ENCODE measurements at regions of chr1 and their contacts with region 1.

Region 1: DNA sequence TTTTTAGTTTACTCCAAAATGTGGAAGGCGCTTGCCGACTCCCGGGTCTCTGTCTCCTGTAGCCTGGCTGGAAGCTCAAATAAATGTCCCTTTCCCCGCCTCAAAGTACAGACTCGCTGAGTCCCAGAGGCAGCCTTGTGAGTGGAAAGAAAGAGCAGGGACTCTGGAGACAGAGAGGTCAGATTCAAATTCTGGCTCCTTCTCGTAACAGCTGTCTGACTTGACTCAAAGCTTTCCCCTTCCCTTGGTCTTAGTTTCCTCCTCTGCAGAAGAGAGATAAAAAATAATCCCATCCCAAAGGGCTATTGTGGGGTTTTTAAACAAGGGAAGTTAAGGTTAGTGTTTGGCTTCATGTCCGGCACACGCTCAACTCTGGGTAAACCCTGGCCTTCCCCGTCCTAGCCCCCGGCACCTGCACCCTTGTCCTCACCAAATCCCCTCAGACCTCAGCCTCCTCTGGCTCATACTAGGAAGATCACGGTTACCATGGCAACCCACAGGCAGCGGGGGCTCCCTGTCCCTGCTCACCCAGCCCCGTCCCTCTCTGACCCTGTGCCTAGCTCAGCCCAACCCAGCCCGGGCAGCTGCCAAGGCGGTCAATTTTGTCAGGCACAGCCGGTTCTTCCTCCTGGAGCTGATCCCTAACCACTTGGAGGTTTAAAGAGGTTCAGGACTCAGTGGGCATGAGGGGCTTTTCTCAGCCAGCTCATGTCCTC is 49.2 kb upstream of the IGSF21 start:
- DNase-seq: no peak
- H3K4me3 ChIP-seq: no peak overlapping the region
- H3K4me3 Mint-ChIP-seq: no peak overlapping the region
- H3K27ac ChIP-seq: no peak overlapping the region
- H3K27ac Mint-ChIP-seq: no peak overlapping the region
- H3K4me1 ChIP-seq: no peaks in the 10 kb centered on the region
- H3K4me1 Mint-ChIP-seq: no peaks in the 10 kb centered on the region
- H3K27me3 ChIP-seq: no peaks in the 10 kb centered on the region
- H3K27me3 Mint-ChIP-seq: peaks cover 0 to 2% (median 1%) of the 10 kb centered on the region in 3 donors
- CTCF ChIP-seq: no peak

Region 2: GRCh38 chr1:18109756-18110597 is 51.6 kb after region 1 on chr1:
- intact Hi-C with region 1: loop called in 1 of 2 experiments (anchors 10 kb)
- DNase-seq: no peak
- H3K4me3 ChIP-seq: no peak overlapping the region
- H3K4me3 Mint-ChIP-seq: peak overlapping the region in 1 of 2 donors; percentile 85
- H3K27ac ChIP-seq: no peak overlapping the region
- H3K27ac Mint-ChIP-seq: peak overlapping the region in 1 of 7 donors; percentile 57
- H3K4me1 ChIP-seq: peaks cover 0 to 6% of the 10 kb centered on the region in 2 donors
- H3K4me1 Mint-ChIP-seq: peaks cover 10% of the 10 kb centered on the region
- H3K27me3 ChIP-seq: peaks cover 50 to 72% of the 10 kb centered on the region in 2 donors
- H3K27me3 Mint-ChIP-seq: peaks cover 70 to 77% (median 75%) of the 10 kb centered on the region in 3 donors
- CTCF ChIP-seq: no peak

Measured in CD14-positive monocyte (primary cell).